ENCODE measurements at regions of chr1 and their contacts with region 1.

Region 1: DNA sequence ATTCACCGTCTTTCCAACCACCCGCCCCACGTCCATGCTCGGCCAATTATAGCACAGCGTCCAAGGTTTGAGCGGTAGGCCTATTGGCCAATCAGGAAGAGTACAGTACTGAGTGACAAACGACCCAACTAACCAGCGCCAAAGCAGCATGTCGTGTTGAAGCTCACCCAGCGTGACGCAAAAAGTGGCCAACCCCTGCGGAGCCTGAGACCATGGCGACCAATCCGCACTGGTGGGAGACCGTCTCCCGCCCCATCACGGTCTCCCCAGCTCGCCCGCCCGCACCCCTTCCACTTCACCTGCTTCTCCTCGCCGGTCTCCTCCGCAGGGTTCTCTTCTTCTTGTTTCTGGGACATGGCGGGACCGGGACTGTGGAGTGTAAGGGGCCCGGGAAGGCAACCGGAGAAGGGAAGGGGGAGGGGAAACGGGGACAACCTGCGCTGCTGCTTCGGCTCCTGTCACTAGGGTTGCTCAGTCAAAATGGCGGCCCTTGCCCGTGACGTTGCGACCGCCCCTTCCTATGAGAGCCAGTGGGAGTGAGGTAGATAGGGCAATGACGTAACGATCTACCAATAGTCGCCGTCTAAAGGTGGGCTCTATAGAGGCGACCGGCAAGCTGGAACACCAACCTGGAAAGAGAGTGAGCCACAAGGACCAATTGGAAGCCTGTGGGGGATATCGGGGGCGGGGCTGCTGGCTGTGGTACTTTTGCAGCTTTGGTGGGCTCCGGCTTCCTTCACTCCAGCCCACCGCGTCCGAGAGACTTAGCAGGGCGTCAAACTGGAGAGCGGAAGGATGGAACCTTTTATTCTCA is at the start of gene ENSA:
- DNase-seq: peak; percentile 100
- H3K4me3 Mint-ChIP-seq: no peak within 1 kb of the TSS
- H3K27ac Mint-ChIP-seq: no peak within 1 kb of the TSS
- H3K4me1 Mint-ChIP-seq: peaks cover 44% of the 10 kb centered on the region
- H3K27me3 Mint-ChIP-seq: no peaks in the 10 kb centered on the region
- CTCF ChIP-seq: no peak
- total RNA-seq, gene ENSA: 261 and 294 TPM in 2 replicates

Region 2: GRCh38 chr1:150606463-150607148 is 22.7 kb before region 1 on chr1:
- CTCF ChIA-PET with region 1: interaction called, 3 read pairs
- POLR2A ChIA-PET with region 1: interaction called, 149 read pairs
- intact Hi-C with region 1: loop called (anchors 1 kb)
- DNase-seq: no peak
- H3K4me3 Mint-ChIP-seq: no peak overlapping the region
- H3K27ac Mint-ChIP-seq: no peak overlapping the region
- H3K4me1 Mint-ChIP-seq: peaks cover 29% of the 10 kb centered on the region
- H3K27me3 Mint-ChIP-seq: no peaks in the 10 kb centered on the region
- CTCF ChIP-seq: no peak

Region 3: GRCh38 chr1:150642296-150642695 is 13.0 kb after region 1 on chr1:
- CTCF ChIA-PET with region 1: interaction called, 6 read pairs
- POLR2A ChIA-PET with region 1: interaction called, 29 read pairs
- intact Hi-C with region 1: no loop called
- DNase-seq: no peak
- H3K4me3 Mint-ChIP-seq: no peak overlapping the region
- H3K27ac Mint-ChIP-seq: no peak overlapping the region
- H3K4me1 Mint-ChIP-seq: no peaks in the 10 kb centered on the region
- H3K27me3 Mint-ChIP-seq: no peaks in the 10 kb centered on the region
- CTCF ChIP-seq: no peak

Region 4: GRCh38 chr1:150661156-150661555 is 31.8 kb after region 1 on chr1:
- CTCF ChIA-PET with region 1: interaction called, 3 read pairs
- POLR2A ChIA-PET with region 1: interaction called, 54 read pairs
- intact Hi-C with region 1: no loop called
- DNase-seq: peak; percentile 46
- H3K4me3 Mint-ChIP-seq: no peak overlapping the region
- H3K27ac Mint-ChIP-seq: peak overlapping the region; percentile 65
- H3K4me1 Mint-ChIP-seq: peaks cover 13% of the 10 kb centered on the region
- H3K27me3 Mint-ChIP-seq: no peaks in the 10 kb centered on the region
- CTCF ChIP-seq: no peak

Measured in MCF 10A (cell line).